ENCODE measurements at regions of chr2 and their contacts with region 1.

Region 1: DNA sequence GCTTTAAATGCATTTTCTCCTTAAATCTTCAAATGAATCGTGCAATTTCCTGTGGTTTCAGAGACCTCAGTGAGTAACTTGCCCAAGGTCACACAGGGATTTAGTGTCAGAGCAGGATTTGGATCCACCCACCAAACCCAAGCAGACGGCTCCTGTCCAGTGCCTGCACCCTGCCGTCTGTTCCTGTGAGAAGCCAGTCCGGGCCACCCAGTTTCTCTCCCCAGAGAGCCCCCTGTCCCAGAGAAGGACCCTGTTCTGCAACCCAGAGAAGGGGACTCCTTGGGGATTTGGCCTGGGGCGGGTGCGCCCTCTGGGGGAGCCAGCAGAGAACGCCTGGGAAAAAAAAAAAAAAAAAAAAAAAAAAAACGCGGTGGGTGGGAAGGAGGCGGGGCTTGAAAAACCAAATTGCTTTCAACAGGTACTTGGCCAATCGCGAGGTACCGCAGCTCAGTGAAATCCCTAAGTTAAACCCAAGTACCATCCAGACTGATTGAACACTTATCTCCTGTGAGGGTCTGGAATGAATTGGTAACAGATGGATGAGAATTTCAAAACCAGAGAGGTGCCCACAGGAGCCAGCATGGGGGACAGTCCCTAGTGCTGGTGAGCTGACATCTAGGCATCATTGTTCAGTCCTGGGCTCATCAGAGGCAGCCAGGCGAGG is 30.9 kb upstream of the REEP1 start:
- DNase-seq: peak; percentile 81
- H3K4me3 ChIP-seq: no peak overlapping the region
- H3K27ac ChIP-seq: no peak overlapping the region
- H3K4me1 ChIP-seq: peaks cover 0 to 3% of the 10 kb centered on the region in 2 experiments; a peak in 1 of 4 replicates
- H3K27me3 ChIP-seq: no peaks in the 10 kb centered on the region
- CTCF ChIP-seq: peak; percentile 61
- EP300 ChIP-seq: no peak
- RAD21 ChIP-seq: peak; percentile 74

Region 2: DNA sequence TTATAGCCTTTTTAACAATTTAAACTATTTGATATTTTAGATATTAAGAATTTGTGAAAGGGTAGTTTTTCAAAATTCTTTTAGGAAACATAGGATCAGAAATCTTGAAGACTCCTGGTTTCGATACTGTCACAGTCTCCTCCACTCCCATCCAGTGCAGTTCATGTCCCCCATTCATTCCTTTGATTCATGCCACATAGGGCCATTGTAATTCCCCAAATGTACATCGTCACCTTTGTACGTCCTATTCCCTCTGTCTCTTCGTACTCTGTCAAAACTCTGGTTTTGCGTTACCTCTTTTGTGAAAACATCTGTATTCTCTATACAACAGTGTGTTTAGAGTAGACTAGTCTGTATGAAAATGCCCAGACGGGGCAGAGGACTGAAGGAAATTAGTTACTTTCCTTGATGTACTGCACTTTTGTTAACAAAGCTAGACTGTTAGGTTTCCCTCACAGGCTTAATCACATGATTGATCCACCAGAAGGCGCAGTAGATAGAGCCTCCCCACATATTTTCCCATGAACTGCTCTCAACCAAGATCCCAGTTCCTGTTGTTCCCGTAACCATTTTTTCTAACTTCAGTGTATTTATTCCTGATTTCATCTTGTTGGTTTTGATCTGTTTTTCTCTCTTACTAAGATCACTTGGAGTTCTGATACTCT is 166.5 kb before region 1 on chr2:
- CTCF ChIA-PET with region 1: interaction called, 11 read pairs
- POLR2A ChIA-PET with region 1: no interaction called
- DNase-seq: no peak
- H3K4me3 ChIP-seq: no peak overlapping the region
- H3K27ac ChIP-seq: no peak overlapping the region
- H3K4me1 ChIP-seq: peaks cover 0 to 3% of the 10 kb centered on the region in 2 experiments; a peak in 2 of 4 replicates
- H3K27me3 ChIP-seq: no peaks in the 10 kb centered on the region
- CTCF ChIP-seq: no peak
- EP300 ChIP-seq: no peak
- RAD21 ChIP-seq: no peak

Region 3: DNA sequence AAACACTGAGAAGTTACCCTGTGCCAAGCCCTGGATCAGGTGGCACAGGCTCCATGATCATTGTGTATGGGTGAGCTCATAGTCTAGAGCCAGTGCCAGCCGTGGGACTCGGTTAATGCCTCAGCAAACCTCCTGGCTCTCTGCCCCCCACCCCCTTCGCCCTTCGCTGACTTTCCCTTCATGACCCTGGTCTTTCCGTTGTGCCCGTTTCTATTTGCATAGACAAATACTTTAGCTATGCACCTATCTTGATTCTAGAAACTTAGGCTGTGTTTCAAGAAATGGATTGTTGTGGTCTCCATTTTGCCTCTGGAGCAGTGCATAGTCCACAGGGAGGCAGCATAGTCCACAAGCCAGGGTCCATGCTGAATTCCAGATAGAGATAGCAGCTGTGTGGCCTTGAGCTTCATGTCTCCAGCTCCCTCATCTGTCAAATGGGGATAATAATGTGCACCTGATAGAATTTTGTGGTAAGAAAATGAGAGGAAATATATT is 28.0 kb after region 1 on chr2:
- CTCF ChIA-PET with region 1: interaction called, 10 read pairs
- POLR2A ChIA-PET with region 1: no interaction called
- DNase-seq: no peak
- H3K4me3 ChIP-seq: no peak overlapping the region
- H3K27ac ChIP-seq: no peak overlapping the region
- H3K4me1 ChIP-seq: peaks cover 0 to 4% of the 10 kb centered on the region in 2 experiments; a peak in 1 of 4 replicates
- H3K27me3 ChIP-seq: no peaks in the 10 kb centered on the region
- CTCF ChIP-seq: peak; percentile 38; the same call in 1 of the 2 replicates
- EP300 ChIP-seq: no peak
- RAD21 ChIP-seq: peak; percentile 49